Dorsolateral prefrontal cortex (tissue), 120 donors: ENCODE measurements at regions of chr9 and their contacts with region 1.

Region 1: GRCh38 chr9:19925817-19926503 is 137.1 kb upstream of the SLC24A2 start:
- DNase-seq: peak in 9 of 10 donors; percentile 43 to 83 (median 75)
- H3K4me3 ChIP-seq: peak overlapping the region; percentile 25 to 75 (median 58)
- H3K27ac ChIP-seq: peak overlapping the region in 24 of 59 donors; percentile 17 to 76 (median 46)
- H3K27me3 ChIP-seq: no peaks in the 10 kb centered on the region
- CTCF ChIP-seq: peak; percentile 91 to 99 (median 97)

Region 2: DNA sequence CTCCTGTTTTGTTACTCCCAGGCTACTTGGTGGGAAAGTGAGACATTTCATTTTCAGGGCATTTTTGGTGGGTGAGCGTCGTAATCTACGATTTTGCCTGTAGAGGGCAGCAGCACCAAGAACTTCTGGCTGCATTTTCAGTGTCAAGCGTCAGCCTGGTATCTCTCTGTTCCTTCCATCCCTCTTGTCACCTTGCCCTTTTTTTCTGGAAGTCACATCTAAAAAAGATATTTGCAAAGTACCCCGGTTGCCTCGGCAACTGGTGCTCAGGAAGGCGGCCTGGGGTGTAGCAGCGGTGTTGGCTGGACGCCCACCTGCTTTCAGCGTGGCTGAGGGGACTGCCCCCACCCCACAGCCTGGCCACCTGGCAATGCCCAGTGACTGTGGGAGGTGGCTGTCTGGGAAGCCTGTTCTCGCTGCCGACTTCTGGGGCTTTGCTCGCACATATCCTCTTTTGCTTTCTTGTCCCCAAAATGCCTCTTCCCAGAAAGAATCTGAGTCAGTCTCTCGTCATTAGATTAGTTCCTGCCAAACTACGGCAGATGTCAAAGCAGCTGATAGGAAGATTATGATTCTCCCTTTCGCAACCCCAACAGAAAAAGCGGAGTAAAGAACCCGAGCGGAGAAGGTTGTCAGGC is 432.7 kb before region 1 on chr9:
- intact Hi-C with region 1: loop called (anchors 2 to 5 kb)
- DNase-seq: peak; percentile 59 to 92 (median 80)
- H3K4me3 ChIP-seq: peak overlapping the region; percentile 3 to 66 (median 45)
- H3K27ac ChIP-seq: peak overlapping the region; percentile 71 to 100 (median 97)
- H3K27me3 ChIP-seq: no peaks in the 10 kb centered on the region
- CTCF ChIP-seq: peak; percentile 59 to 93 (median 84)

Region 3: DNA sequence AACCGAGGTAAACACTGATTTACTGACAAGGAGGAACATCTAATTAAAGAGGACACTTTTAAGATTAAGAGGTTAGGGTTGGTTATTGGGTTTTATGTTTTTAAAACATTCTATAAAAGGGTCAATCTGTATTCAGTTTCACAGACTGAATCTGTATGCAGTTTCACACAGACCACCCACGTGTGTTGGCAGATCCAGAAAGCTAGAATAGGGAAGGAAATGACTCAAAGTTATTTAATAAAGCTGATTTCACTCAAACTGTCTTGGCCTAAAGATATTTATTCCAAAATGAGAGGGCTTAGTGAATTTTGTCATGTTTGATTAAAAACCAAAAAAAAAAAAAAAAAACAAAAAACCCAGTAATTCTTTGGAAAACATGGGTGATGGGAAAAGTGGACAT is 277.3 kb before region 1 on chr9:
- intact Hi-C with region 1: loop called (anchors 5 to 10 kb)
- DNase-seq: peak in 1 of 10 donors; percentile 39
- H3K4me3 ChIP-seq: no peak overlapping the region
- H3K27ac ChIP-seq: peak overlapping the region in 52 of 59 donors; percentile 6 to 92 (median 73)
- H3K27me3 ChIP-seq: no peaks in the 10 kb centered on the region
- CTCF ChIP-seq: no peak

Region 4: GRCh38 chr9:19782005-19782404 is 144.0 kb before region 1 on chr9:
- intact Hi-C with region 1: loop called in 1 of 2 experiments (anchors 10 kb)
- DNase-seq: peak in 2 of 10 donors; percentile 42 to 56
- H3K4me3 ChIP-seq: peak overlapping the region; percentile 3 to 89 (median 77)
- H3K27ac ChIP-seq: peak overlapping the region in 52 of 59 donors; percentile 2 to 98 (median 92)
- H3K27me3 ChIP-seq: no peaks in the 10 kb centered on the region
- CTCF ChIP-seq: no peak

Region 5: GRCh38 chr9:20043035-20043434 is 117.1 kb after region 1 on chr9:
- intact Hi-C with region 1: no loop called
- DNase-seq: no peak
- H3K4me3 ChIP-seq: no peak overlapping the region
- H3K27ac ChIP-seq: no peak overlapping the region
- H3K27me3 ChIP-seq: no peaks in the 10 kb centered on the region
- CTCF ChIP-seq: no peak

Region 6: GRCh38 chr9:20356403-20357035 is 430.6 kb after region 1 on chr9:
- intact Hi-C with region 1: loop called in 1 of 2 experiments (anchors 10 kb)
- DNase-seq: peak; percentile 37 to 79 (median 68)
- H3K4me3 ChIP-seq: peak overlapping the region in 33 of 59 donors; percentile 1 to 46 (median 26)
- H3K27ac ChIP-seq: peak overlapping the region in 34 of 59 donors; percentile 0 to 67 (median 35)
- H3K27me3 ChIP-seq: no peaks in the 10 kb centered on the region
- CTCF ChIP-seq: peak; percentile 35 to 84 (median 74)

Region 7: DNA sequence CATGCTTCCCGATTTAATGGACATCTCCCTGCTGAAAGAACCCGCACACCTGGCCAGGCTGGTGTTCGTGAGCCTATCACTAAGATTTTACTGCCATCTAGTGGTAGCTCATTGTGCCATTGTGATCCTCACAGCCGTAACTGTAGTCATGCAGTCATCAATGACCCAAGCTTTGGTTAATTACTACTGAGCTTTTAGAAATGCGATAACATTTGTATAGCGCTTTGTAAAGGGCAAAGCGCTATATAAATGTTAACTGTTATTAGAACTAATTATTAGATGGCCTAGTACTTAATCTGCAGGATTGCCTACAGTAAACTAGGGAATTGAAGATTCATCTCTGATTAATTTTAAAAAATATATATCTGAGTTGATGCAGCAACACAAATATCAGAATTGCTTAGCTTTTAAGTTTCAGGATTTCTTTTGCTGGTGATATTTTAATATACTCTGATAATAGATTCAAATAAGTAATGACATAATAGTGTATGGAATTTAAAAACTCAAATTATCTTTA is 1015.3 kb after region 1 on chr9:
- intact Hi-C with region 1: loop called (anchors 2 to 5 kb)
- DNase-seq: peak in 6 of 10 donors; percentile 30 to 63 (median 44)
- H3K4me3 ChIP-seq: no peak overlapping the region
- H3K27ac ChIP-seq: no peak overlapping the region
- H3K27me3 ChIP-seq: no peaks in the 10 kb centered on the region
- CTCF ChIP-seq: peak; percentile 57 to 98 (median 89)